Activated T-helper 2 cell treated with anti-CD3 and anti-CD28 coated beads, Interferon-gamma antibody, Interleukin-2, Interleukin-4, amounts not matched to agents 10 μg/mL and 5 μg/mL and 100 μg/mL, durations not matched to agents 14 hours and 24 hours and 36 hours (primary cell): ENCODE measurements at regions of chr3 and their contacts with region 1.

Region 1: DNA sequence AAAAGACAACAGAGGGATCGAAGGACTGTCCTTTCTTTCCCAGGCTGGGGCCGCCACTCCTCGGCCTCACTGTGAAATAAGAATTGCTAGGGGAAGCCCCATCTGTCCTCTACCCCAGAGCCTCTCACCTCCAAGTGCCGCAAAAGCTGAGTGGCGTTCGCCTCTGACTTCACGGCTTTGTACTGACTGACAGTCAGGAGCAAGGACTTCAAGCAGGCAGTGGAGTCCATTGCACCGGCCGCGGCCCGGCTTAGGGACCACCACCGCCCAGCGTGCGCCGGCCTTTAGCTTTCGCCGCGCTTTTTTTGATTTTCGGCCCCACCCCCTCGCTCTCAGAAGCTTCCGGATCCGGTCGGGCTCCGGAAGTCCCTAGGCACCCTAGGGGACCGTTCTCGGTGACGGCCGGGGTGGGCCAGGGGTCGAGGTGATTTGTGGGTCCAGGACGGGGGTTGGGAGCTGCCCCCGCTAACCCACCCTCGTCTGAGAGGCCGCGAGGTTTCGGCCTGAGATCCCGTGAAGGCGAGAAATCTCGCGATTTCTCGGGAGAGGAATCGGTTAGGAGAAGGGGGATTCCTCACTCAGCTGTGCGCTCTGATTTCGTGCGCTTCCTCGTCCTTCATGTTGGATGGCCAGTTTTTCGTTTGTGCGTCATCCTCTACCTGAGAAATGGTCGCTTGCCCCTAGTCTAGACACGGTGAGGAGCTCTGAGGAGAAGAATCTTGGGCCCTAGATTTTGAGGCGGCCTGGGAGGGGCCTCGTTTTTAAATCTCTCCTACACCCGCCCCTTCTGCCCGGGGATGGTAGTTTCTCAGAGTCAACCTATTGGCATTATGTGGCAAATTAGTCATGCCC is at the starts of genes CIP2A and DZIP3:
- DNase-seq: peak; percentile 81
- H3K4me3 Mint-ChIP-seq: peak within 1 kb of the TSS; percentile 99
- H3K27ac Mint-ChIP-seq: peak within 1 kb of the TSS; percentile 99
- H3K4me1 Mint-ChIP-seq: peaks cover 46% of the 10 kb centered on the region
- H3K27me3 Mint-ChIP-seq: no peaks in the 10 kb centered on the region
- total RNA-seq, gene CIP2A: 45.6 and 53.2 TPM in 2 replicates
- total RNA-seq, gene DZIP3: 4.9 and 6.4 TPM in 2 replicates

Region 2: GRCh38 chr3:108221911-108222852 is 367.2 kb before region 1 on chr3 and contains the start of gene IFT57:
- intact Hi-C with region 1: loop called (anchors 1 kb)
- DNase-seq: peak; percentile 93
- H3K4me3 Mint-ChIP-seq: peak within 1 kb of the TSS; percentile 94
- H3K27ac Mint-ChIP-seq: peak within 1 kb of the TSS; percentile 89
- H3K4me1 Mint-ChIP-seq: peaks cover 41% of the 10 kb centered on the region
- H3K27me3 Mint-ChIP-seq: peaks cover 2% of the 10 kb centered on the region
- total RNA-seq, gene IFT57: 21.6 and 22.0 TPM in 2 replicates

Region 3: DNA sequence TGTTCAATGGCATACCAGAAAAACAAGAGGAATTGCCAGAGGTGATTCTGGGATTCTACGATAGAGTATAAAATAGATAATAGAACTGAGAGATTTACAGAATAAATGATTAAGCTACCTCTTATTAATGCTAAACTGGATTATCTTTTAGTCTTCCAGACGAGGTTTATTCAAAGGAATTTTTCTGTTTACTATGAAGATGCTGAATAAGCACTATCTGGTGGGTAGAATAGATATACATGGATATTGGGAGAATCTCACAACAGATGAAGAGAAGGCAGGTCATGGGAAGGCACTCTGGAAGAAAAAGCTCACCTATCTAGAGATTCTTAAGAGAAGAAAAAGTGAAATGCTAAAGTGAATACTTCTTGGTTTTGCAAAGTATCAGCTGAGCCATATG is 11.3 kb before region 1 on chr3:
- intact Hi-C with region 1: loop called (anchors 1 kb)
- DNase-seq: no peak
- H3K4me3 Mint-ChIP-seq: no peak overlapping the region
- H3K27ac Mint-ChIP-seq: no peak overlapping the region
- H3K4me1 Mint-ChIP-seq: peaks cover 19% of the 10 kb centered on the region
- H3K27me3 Mint-ChIP-seq: no peaks in the 10 kb centered on the region

Region 4: DNA sequence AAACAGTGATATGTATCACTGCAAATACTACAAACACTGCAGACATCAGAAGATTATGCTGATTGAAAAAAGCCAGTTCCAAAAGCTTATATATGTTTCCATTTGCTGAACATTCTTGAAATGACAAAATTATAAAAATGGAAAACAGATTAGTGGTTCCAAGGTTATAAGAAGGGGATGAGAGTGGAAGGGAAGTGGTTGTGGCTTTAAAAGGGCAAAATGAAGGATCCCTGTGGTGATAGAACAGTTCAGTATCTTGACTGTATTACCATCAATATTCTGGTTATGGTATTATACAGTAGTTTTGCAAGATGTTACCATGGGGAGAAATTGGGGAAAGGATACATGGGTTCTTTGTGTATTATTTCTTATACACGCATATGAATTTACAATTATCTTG is 77.9 kb after region 1 on chr3:
- intact Hi-C with region 1: loop called (anchors 2 kb)
- DNase-seq: no peak
- H3K4me3 Mint-ChIP-seq: no peak overlapping the region
- H3K27ac Mint-ChIP-seq: peak overlapping the region; percentile 42
- H3K4me1 Mint-ChIP-seq: peaks cover 33% of the 10 kb centered on the region
- H3K27me3 Mint-ChIP-seq: no peaks in the 10 kb centered on the region

Region 5: DNA sequence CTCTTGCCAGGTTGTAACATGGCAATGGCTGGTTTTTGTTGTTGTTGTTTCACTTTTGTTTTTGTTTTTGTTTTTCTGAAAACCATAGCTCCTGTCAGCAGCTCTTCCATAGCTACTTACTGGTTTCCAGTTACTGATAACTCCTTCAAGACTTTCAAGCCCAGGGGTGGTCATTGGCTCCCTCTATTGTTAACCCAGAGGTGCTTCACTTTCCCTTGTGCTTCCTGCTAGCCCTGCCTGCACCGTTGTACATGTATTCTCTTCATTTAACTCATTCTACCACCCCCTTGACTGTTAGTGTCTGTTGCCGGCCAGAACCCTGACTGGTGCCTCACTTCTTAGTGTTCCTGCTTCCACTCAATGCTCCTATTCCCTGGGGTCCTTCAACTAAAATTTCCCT is 229.0 kb after region 1 on chr3:
- intact Hi-C with region 1: loop called (anchors 2 kb)
- DNase-seq: peak; percentile 54
- H3K4me3 Mint-ChIP-seq: no peak overlapping the region
- H3K27ac Mint-ChIP-seq: peak overlapping the region; percentile 26
- H3K4me1 Mint-ChIP-seq: peaks cover 30% of the 10 kb centered on the region
- H3K27me3 Mint-ChIP-seq: no peaks in the 10 kb centered on the region

Region 6: GRCh38 chr3:108862865-108863798 is 273.8 kb after region 1 on chr3:
- intact Hi-C with region 1: loop called (anchors 2 kb)
- DNase-seq: no peak
- H3K4me3 Mint-ChIP-seq: no peak overlapping the region
- H3K27ac Mint-ChIP-seq: peak overlapping the region; percentile 98
- H3K4me1 Mint-ChIP-seq: peaks cover 25% of the 10 kb centered on the region
- H3K27me3 Mint-ChIP-seq: no peaks in the 10 kb centered on the region